OCI-LY7 (cell line): ENCODE measurements at regions of chrX and their contacts with region 1.

Region 1: DNA sequence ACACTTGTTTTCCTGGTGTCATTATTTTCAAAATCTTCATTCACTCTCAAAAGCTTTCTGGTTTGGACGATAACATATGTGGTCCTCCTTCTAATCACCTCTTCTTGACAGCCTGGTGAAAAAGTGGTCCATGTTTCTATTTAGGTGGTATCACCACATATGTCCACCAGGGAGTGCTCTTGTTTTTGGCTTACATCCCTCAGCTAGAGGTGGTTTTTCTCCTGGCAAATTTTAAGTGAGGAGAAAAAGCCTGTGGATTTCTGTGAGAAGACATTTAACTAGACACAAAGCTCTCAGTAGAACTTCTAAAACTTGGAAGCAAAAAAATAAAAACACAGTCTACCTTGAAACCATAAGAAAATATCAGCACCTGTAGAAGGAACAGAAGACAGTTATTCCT is 58.0 kb upstream of the FRMPD4 start:
- DNase-seq: peak; percentile 9
- H3K4me3 ChIP-seq: no peak overlapping the region
- H3K27ac ChIP-seq: no peak overlapping the region
- H3K4me1 ChIP-seq: no peaks in the 10 kb centered on the region
- CTCF ChIP-seq: peak; percentile 64

Region 2: GRCh38 chrX:12013220-12013619 is 67.0 kb before region 1 on chrX:
- CTCF ChIA-PET with region 1: no interaction called
- POLR2A ChIA-PET with region 1: no interaction called
- intact Hi-C with region 1: no loop called
- DNase-seq: no peak
- H3K4me3 ChIP-seq: no peak overlapping the region
- H3K27ac ChIP-seq: no peak overlapping the region
- H3K4me1 ChIP-seq: no peaks in the 10 kb centered on the region
- CTCF ChIP-seq: no peak

Region 3: DNA sequence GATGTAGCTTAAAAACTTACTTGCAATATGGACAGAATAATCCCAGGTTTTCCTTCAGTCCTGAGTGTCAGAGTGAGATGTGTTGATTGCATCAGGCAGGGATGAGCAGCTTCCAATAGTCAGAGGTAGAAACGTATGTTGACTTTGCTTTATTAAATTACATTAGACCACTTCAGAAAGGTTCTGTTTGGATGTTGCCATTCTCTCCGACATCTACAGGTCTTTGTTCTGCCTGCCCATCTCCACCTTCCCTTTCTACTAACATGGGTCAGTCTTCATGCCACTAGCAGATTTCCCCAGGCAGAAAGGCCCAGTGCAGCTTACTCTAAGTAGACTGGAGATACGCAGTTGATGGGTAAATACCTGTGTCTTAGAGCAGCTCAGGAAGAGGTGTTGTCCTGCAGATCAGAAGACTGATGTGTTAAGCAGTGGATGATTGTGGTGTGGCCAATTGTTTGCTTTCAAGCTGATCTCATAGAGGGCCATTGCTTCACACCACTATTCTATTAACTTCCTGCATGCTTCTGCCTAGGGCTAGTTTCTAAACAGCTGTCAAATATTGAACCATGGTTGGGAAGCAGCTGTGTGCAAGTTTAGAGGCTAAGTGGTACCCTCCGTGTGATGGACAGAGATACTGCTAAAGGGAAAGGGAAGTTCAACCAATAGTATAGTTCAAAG is 59.8 kb after region 1 on chrX:
- CTCF ChIA-PET with region 1: no interaction called
- POLR2A ChIA-PET with region 1: no interaction called
- intact Hi-C with region 1: no loop called
- DNase-seq: no peak
- H3K4me3 ChIP-seq: no peak overlapping the region
- H3K27ac ChIP-seq: no peak overlapping the region
- H3K4me1 ChIP-seq: no peaks in the 10 kb centered on the region
- CTCF ChIP-seq: no peak

Region 4: GRCh38 chrX:12567857-12568256 is 487.6 kb after region 1 on chrX:
- CTCF ChIA-PET with region 1: no interaction called
- POLR2A ChIA-PET with region 1: no interaction called
- intact Hi-C with region 1: loop called (anchors 10 kb)
- DNase-seq: peak; percentile 29
- H3K4me3 ChIP-seq: no peak overlapping the region
- H3K27ac ChIP-seq: no peak overlapping the region
- H3K4me1 ChIP-seq: no peaks in the 10 kb centered on the region
- CTCF ChIP-seq: peak; percentile 80

Region 5: GRCh38 chrX:12741439-12741838 is 661.2 kb after region 1 on chrX:
- CTCF ChIA-PET with region 1: no interaction called
- POLR2A ChIA-PET with region 1: no interaction called
- intact Hi-C with region 1: no loop called
- DNase-seq: no peak
- H3K4me3 ChIP-seq: no peak overlapping the region
- H3K27ac ChIP-seq: no peak overlapping the region
- H3K4me1 ChIP-seq: no peaks in the 10 kb centered on the region
- CTCF ChIP-seq: no peak